Left ventricle myocardium superior (tissue), 1 donor: ENCODE measurements at regions of chr6 and their contacts with region 1.

Region 1: DNA sequence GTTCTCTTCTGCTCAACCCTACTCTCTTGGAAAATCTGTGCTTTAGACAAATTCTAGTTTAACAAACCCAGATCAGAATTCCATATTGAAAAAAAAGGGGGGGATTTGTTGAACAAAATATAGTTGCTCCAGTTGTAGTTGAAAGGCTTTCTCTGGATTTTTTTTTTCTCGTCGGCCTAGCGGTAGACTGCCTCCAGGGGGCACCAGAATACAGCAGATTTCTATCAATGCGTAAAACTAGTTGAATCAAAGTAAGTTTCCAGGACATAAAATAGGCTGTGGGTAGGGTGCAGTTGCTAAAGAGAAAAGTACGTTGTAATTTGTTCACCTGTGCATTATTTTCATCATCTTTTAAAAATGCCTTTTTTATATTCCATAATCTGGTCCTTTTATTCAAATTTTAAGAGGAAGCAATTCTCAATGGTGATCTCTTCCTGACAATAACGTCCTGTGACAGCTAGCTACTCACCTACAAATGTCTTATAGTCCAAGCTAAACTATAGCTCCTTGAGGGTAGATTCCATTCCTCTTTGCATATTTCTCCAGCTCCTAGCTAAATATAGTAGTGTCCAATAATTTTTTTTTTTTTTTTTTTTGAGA is 105.4 kb downstream of the PERP start:
- DNase-seq: peak; percentile 57
- ATAC-seq: peak; percentile 28

Region 2: GRCh38 chr6:138109042-138109997 is 107.5 kb after region 1 on chr6:
- intact Hi-C with region 1: loop called (anchors 2 kb)
- DNase-seq: peak; percentile 55
- ATAC-seq: no peak

Region 3: DNA sequence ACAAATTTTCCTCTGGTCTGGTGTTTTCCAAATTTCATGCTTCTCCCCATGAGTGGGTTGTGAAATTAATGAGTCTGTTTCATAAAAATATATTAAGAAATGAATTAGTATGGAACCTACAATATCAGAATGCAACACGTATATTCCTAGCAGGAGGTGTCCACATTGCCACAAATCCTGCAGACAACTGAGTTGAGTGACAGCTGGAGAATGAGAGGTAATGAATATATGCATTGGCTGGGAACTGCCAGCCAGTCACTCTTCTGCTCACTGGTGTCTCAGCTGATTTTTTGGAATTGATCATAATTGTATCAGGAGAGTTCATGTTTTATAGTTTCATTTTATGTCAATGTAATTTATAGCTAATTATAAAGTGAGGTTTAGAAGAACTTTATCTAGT is 153.6 kb after region 1 on chr6:
- intact Hi-C with region 1: no loop called
- DNase-seq: no peak
- ATAC-seq: no peak

Region 4: GRCh38 chr6:138485005-138485545 is 483.2 kb after region 1 on chr6:
- intact Hi-C with region 1: no loop called
- DNase-seq: no peak
- ATAC-seq: peak; percentile 54